Pancreas (tissue), 10 donors: ENCODE measurements at regions of chr5 and their contacts with region 1.

Region 1: DNA sequence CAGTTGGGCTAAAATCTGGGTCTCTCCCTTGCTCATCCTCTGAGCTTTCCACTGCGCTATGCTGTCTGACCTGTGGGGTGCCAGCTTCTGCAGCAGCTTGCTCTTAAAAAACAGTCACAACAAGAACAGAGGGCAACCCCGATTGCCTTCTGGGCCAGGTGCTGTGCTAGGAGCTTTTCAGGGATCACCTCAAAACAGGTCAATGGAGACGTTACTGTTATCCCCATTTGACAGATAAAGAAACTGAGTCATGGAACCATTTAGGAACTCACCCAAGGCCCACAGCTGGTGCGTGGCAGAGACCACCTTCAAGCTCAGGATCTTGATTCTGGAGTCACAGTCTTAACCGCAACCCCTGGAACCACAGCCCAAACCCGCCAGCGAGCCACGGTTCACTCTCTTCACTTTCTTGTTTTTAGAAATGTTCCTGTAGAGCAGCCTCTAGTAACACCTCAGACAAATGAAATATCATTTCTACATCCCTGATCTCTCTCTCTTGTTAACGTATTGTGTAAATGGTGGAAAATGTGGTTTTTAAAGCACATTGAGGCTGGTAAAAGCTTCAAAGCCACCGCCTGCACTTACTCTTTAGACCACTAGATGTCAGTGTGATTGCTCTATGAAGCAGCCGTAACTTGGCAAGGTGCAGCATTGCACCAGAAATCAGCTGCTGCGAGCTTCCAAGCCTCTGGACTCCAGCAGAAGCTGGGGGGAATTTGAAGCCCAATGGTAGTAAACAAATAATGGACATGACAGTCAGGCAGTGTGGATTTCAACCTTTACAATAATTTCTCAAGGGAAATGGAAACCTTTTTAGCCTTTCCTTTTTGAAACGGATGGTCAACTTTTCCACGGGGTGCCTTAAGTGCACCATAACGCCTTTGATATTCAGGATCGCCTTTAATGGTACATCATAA is 1.7 kb downstream of the FYB1 start:
- DNase-seq: peak in 5 of 6 donors; percentile 48 to 79 (median 61)
- ATAC-seq: peak; percentile 77 to 93 (median 92)
- H3K4me3 ChIP-seq: peak overlapping the region in 1 of 4 donors; percentile 22
- H3K27ac ChIP-seq: no peak overlapping the region
- H3K4me1 ChIP-seq: no peaks in the 10 kb centered on the region
- H3K27me3 ChIP-seq: no peaks in the 10 kb centered on the region
- CTCF ChIP-seq: peak; percentile 87 to 97 (median 96)

Region 2: GRCh38 chr5:39566891-39567290 is 349.3 kb after region 1 on chr5:
- intact Hi-C with region 1: loop called in 1 of 3 experiments (anchors 10 kb)
- DNase-seq: no peak
- ATAC-seq: no peak
- H3K4me3 ChIP-seq: no peak overlapping the region
- H3K27ac ChIP-seq: no peak overlapping the region
- H3K4me1 ChIP-seq: no peaks in the 10 kb centered on the region
- H3K27me3 ChIP-seq: no peaks in the 10 kb centered on the region
- CTCF ChIP-seq: no peak